Endothelial cell of umbilical vein (primary cell): ENCODE measurements at regions of chr12 and their contacts with region 1.

Region 1: GRCh38 chr12:113762155-113762881 is 203.8 kb downstream of the RBM19 start:
- DNase-seq: no peak
- H3K4me3 ChIP-seq: no peak overlapping the region
- H3K27ac ChIP-seq: no peak overlapping the region
- H3K4me1 ChIP-seq: no peaks in the 10 kb centered on the region
- H3K27me3 ChIP-seq: no peaks in the 10 kb centered on the region
- CTCF ChIP-seq: no peak
- POLR2A ChIP-seq: no peak

Region 2: GRCh38 chr12:113720629-113721028 is 41.7 kb before region 1 on chr12:
- CTCF ChIA-PET with region 1: no interaction called
- POLR2A ChIA-PET with region 1: no interaction called
- dilution Hi-C with region 1: no loop called
- intact Hi-C with region 1: loop called (anchors 2 kb)
- DNase-seq: no peak
- H3K4me3 ChIP-seq: no peak overlapping the region
- H3K27ac ChIP-seq: no peak overlapping the region
- H3K4me1 ChIP-seq: no peaks in the 10 kb centered on the region
- H3K27me3 ChIP-seq: no peaks in the 10 kb centered on the region
- CTCF ChIP-seq: no peak
- POLR2A ChIP-seq: no peak